HepG2 (cell line): ENCODE measurements at regions of chr17 and their contacts with region 1.

Region 1: GRCh38 chr17:82297714-82298537 is 19.5 kb downstream of the CD7 start:
- DNase-seq: no peak
- ATAC-seq: peak; percentile 45
- H3K4me3 ChIP-seq: peak overlapping the region; percentile 52 to 78 (median 56)
- H3K27ac ChIP-seq: peak overlapping the region; percentile 8
- H3K4me1 ChIP-seq: peaks cover 96% of the 10 kb centered on the region
- H3K27me3 ChIP-seq: no peaks in the 10 kb centered on the region
- CTCF ChIP-seq: peak; percentile 47
- EP300 ChIP-seq: peak; percentile 39 to 59; a peak in 1 of 4 replicates
- POLR2A ChIP-seq: no peak; a peak in 1 of 4 replicates
- RAD21 ChIP-seq: no peak

Region 2: DNA sequence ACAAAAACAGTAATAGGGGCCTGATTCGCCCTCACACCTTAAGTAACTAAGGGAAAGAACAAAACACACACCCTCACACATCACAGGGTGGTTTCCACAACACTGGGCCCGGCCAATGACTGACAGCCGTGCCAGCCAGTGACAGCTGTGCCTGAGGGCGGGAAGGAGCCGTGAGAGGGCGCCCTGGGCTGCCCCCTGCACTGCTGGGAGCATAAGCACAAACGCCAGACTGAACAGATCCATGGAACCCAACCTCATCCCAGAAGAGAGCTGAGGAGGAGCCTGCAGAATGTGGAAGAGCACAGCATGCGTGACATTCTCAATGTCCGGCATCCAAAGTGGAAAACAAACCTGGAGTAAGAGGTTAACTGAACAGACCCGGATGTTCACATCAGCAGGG is 40.5 kb before region 1 on chr17:
- CTCF ChIA-PET with region 1: no interaction called
- POLR2A ChIA-PET with region 1: interaction called, 3 read pairs
- in situ Hi-C with region 1: no loop called
- intact Hi-C with region 1: loop called (anchors 5 kb)
- DNase-seq: no peak
- ATAC-seq: peak; percentile 84
- H3K4me3 ChIP-seq: no peak overlapping the region
- H3K27ac ChIP-seq: no peak overlapping the region
- H3K4me1 ChIP-seq: no peaks in the 10 kb centered on the region
- H3K27me3 ChIP-seq: no peaks in the 10 kb centered on the region
- CTCF ChIP-seq: peak; percentile 53
- EP300 ChIP-seq: no peak
- POLR2A ChIP-seq: no peak
- RAD21 ChIP-seq: no peak

Region 3: GRCh38 chr17:82273327-82274133 is 24.4 kb before region 1 on chr17 and contains the start of gene CSNK1D:
- CTCF ChIA-PET with region 1: no interaction called
- POLR2A ChIA-PET with region 1: interaction called, 119 read pairs
- in situ Hi-C with region 1: no loop called
- intact Hi-C with region 1: no loop called
- DNase-seq: peak; percentile 85
- ATAC-seq: peak; percentile 83
- H3K4me3 ChIP-seq: peak within 1 kb of the TSS; percentile 88 to 97 (median 88)
- H3K27ac ChIP-seq: peak within 1 kb of the TSS; percentile 92
- H3K4me1 ChIP-seq: peaks cover 75% of the 10 kb centered on the region
- H3K27me3 ChIP-seq: no peaks in the 10 kb centered on the region; a peak in 1 of 5 replicates
- CTCF ChIP-seq: no peak; the same call in none of the 2 replicates
- EP300 ChIP-seq: peak in 1 of 2 experiments; percentile 42; a peak in 2 of 4 replicates
- POLR2A ChIP-seq: peak; percentile 71 to 92
- RAD21 ChIP-seq: peak; percentile 77
- total RNA-seq, gene CSNK1D: 28.4 and 31.5 TPM in 2 replicates

Region 4: DNA sequence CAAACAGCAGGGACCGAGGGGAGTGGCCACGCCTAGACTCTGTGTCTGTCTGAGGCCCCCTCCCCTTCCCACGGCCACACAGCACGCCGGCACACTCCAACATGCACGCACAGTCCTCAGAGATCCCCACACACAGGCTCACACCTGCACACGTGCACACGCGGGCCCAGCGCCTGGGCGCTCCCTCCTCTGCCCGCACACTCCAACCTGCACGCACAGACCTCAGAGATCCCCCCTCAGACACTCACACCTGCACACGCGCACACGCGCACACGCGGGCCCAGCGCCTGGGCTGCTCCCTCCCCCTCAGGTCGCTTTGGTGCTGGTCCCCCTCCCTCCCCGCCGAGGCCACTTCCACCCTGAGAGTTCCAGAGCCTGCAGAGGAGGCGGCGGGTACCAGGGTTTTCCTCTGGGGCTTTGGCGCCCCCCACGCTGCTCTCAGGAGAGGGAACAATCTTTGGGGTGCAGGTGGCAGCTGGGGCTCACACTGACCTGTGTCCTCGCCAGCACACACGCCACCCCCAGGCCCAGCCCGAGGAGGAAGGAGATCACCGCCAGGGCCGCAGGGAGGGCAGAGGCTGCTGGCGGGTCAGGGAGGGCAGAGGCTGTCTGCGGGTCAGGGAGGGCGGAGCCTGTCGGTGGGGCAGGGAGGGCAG is 17.9 kb after region 1 on chr17:
- CTCF ChIA-PET with region 1: interaction called, 26 read pairs
- POLR2A ChIA-PET with region 1: interaction called, 270 read pairs
- in situ Hi-C with region 1: no loop called
- intact Hi-C with region 1: loop called (anchors 2 kb)
- DNase-seq: no peak
- ATAC-seq: peak; percentile 3; the same call in 1 of the 3 replicates
- H3K4me3 ChIP-seq: peak overlapping the region in 2 of 3 experiments; percentile 69 to 72; a peak in 3 of 6 replicates
- H3K27ac ChIP-seq: no peak overlapping the region
- H3K4me1 ChIP-seq: peaks cover 56% of the 10 kb centered on the region
- H3K27me3 ChIP-seq: no peaks in the 10 kb centered on the region; a peak in 1 of 5 replicates
- CTCF ChIP-seq: peak; percentile 53
- EP300 ChIP-seq: no peak
- POLR2A ChIP-seq: no peak
- RAD21 ChIP-seq: no peak

Region 5: DNA sequence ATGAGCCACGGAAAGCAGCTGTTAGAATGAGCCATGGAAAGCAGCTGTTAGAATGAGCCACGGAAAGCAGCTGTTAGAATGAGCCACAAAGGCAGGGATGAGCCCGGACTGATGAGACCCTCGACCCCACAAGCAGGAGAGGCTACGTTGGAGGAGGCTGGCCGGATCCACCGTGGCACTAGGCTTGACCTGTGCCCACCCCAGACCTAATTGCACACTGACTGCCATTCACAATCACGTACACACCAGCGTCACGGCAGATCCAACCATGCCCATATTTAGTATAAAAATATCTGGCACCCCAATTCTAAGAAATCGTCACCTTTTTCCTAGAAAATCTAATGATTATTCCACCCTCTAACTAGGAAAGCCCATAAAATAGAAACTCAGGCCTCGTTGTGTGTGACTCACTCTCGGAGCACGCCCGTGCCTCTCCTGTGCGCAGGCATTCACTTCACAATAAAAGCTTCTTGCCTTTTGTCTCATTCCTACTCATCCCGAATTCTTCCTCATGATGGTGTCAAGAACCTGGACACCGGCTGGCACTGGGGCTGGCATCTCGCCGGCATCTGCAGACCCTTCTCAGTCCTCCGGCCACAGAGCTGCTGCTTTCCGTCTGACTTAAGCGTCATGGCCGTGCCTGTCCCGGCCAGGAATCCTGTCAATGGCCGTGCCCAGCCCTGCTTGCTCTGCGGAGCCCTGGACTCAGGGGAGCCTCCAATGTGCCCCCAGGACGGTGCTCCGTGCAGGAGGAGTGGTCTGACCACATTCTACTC is 41.1 kb after region 1 on chr17:
- CTCF ChIA-PET with region 1: no interaction called
- POLR2A ChIA-PET with region 1: interaction called, 270 read pairs
- in situ Hi-C with region 1: no loop called
- intact Hi-C with region 1: loop called (anchors 5 kb)
- DNase-seq: no peak
- ATAC-seq: peak; percentile 44
- H3K4me3 ChIP-seq: peak overlapping the region; percentile 48 to 69 (median 56)
- H3K27ac ChIP-seq: peak overlapping the region; percentile 72
- H3K4me1 ChIP-seq: peaks cover 81% of the 10 kb centered on the region
- H3K27me3 ChIP-seq: no peaks in the 10 kb centered on the region
- CTCF ChIP-seq: no peak
- EP300 ChIP-seq: no peak; a peak in 1 of 4 replicates
- POLR2A ChIP-seq: peak; percentile 2 to 52; a peak in 3 of 4 replicates
- RAD21 ChIP-seq: no peak

Region 6: GRCh38 chr17:82351716-82352488 is 54.0 kb after region 1 on chr17:
- CTCF ChIA-PET with region 1: no interaction called
- POLR2A ChIA-PET with region 1: interaction called, 73 read pairs
- in situ Hi-C with region 1: no loop called
- intact Hi-C with region 1: loop called (anchors 2 kb)
- DNase-seq: peak; percentile 89
- ATAC-seq: peak; percentile 81
- H3K4me3 ChIP-seq: peak overlapping the region; percentile 23 to 69 (median 27); a peak in 4 of 6 replicates
- H3K27ac ChIP-seq: peak overlapping the region; percentile 4
- H3K4me1 ChIP-seq: peaks cover 94% of the 10 kb centered on the region
- H3K27me3 ChIP-seq: no peaks in the 10 kb centered on the region
- CTCF ChIP-seq: peak; percentile 99
- EP300 ChIP-seq: 0 out of 4 replicates have a peak, but pooled peaks have one; percentile 12 to 28
- POLR2A ChIP-seq: no peak
- RAD21 ChIP-seq: peak; percentile 99